ENCODE measurements at regions of chr15 and their contacts with region 1.

Region 1: DNA sequence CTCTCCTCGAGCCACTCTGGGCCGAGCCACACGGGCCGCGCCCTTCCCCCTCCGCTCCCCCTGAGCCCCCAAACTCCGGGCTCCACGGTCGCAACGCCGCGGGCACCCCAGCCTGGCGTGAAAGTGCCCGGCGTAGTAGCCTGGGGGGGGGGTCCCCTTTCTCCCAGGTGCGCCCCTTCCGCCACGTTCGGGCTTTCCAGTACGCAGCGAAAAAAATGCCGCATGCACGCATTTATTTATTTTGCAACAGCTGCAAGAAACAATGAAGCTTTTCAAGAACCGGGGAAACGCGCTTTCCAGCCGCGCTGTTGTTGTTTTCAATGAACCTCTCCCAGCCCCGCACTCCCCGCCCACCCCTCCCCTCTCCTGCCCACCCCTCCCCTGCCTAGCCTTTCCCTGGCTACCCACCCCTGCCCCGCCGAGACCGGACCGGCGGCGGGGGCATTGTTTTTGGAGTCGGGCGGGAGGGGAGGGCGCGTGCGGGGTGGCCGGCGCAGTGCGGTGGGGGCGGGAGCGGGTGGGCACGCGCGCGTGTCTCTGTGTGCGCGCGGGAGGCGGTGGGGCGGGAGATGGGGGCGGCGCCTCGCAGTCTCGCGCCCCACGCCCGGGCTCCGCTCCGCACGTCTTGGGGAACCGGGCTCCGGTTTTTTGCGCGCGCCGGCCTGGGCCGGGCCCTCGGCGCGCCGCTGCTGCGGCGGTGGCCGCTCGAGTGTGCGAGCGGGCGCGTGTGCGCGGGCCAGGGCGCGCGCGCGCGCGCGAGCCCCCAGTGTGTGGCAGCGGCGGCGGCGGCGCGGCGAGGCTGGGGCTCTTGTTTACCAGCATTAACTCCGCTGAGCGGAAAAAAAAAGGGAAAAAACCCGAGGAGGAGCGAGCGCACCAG is at the start of gene IGF1R:
- DNase-seq: peak; percentile 98
- H3K4me3 Mint-ChIP-seq: peak within 1 kb of the TSS; percentile 85
- H3K27ac Mint-ChIP-seq: peak within 1 kb of the TSS; percentile 95
- H3K4me1 Mint-ChIP-seq: peaks cover 30% of the 10 kb centered on the region
- H3K27me3 Mint-ChIP-seq: peaks cover 55% of the 10 kb centered on the region
- total RNA-seq, gene IGF1R: 35.3 and 36.6 TPM in 2 replicates

Region 2: DNA sequence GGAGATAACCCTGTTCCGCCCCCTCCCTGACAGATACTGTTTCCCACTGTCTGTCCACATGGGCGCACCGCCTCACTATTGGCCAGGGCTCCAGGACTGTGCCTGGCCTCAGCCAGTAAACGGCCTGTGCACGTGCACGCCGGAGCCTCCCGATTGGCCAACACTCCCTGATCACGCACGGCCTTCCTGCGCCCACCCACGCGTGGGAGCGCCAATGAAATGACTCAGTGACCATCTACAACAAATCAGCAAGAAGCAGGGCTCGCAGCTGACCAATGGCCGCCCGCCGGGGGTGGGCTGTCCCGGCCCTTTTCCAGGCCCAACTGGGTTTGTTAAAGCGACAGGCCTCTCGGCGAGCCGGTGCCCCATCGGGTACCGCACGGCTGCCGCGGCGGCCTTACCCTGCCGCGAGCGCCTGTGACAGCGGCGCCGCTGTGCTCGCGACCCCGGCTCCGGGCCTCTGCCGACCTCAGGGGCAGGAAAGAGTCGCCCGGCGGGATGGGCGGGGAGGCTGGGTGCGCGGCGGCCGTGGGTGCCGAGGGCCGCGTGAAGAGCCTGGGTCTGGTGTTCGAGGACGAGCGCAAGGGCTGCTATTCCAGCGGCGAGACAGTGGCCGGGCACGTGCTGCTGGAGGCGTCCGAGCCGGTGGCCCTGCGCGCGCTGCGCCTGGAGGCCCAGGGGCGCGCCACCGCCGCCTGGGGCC is 687.5 kb before region 1 on chr15 and contains the start of gene ARRDC4:
- intact Hi-C with region 1: loop called (anchors 10 kb)
- DNase-seq: peak; percentile 99
- H3K4me3 Mint-ChIP-seq: peak within 1 kb of the TSS; percentile 70
- H3K27ac Mint-ChIP-seq: peak within 1 kb of the TSS; percentile 89
- H3K4me1 Mint-ChIP-seq: peaks cover 19% of the 10 kb centered on the region
- H3K27me3 Mint-ChIP-seq: peaks cover 18% of the 10 kb centered on the region
- total RNA-seq, gene ARRDC4: 1.0 and 1.1 TPM in 2 replicates

Region 3: GRCh38 chr15:98493917-98494511 is 154.0 kb before region 1 on chr15:
- intact Hi-C with region 1: no loop called
- DNase-seq: no peak
- H3K4me3 Mint-ChIP-seq: no peak overlapping the region
- H3K27ac Mint-ChIP-seq: no peak overlapping the region
- H3K4me1 Mint-ChIP-seq: no peaks in the 10 kb centered on the region
- H3K27me3 Mint-ChIP-seq: peaks cover 5% of the 10 kb centered on the region

Region 4: DNA sequence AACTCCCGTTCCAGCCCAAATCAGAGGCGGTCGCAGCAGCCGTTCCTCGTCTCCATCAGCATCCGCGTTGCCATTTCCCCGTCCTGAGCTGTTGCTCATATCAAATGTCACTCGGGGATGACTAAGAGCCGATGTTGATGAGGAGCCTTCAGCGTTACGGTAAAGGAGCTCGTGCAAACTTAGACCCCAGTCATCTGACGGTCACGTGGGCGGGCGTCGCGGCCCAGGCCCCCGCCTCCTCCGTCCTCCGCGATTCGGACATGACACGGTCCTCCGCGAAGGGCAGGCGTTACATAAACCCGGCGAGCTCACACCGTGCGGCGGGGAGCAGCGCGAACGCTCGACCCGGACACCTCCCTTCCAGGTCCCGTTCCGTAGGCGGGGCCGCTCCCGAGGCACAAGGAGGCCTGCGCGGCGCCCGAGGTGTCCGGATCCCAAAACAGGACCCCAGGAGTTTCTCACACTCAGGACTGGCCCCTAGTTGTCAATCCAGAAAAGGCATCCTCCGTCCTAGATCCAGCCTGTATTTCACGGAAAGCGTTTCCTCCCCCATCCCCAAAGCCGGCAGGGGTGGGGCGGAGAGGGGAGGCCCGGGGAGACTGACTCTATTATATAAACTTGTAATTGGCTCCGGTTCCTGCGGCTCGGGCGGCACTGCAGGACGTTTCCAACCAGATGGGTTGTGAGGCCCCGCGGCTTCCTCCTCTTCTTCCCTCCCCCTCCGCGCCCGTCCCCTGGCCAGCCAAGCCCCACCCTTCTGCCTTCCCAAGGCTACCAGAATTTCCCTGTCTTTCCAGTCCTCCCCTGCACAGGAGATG is 99.7 kb before region 1 on chr15:
- intact Hi-C with region 1: loop called (anchors 1 kb)
- DNase-seq: peak; percentile 74
- H3K4me3 Mint-ChIP-seq: peak overlapping the region; percentile 88
- H3K27ac Mint-ChIP-seq: peak overlapping the region; percentile 75
- H3K4me1 Mint-ChIP-seq: peaks cover 14% of the 10 kb centered on the region
- H3K27me3 Mint-ChIP-seq: peaks cover 49% of the 10 kb centered on the region

Region 5: GRCh38 chr15:98668566-98669308 is 20.7 kb after region 1 on chr15:
- intact Hi-C with region 1: loop called (anchors 2 kb)
- DNase-seq: peak; percentile 84
- H3K4me3 Mint-ChIP-seq: peak overlapping the region; percentile 32
- H3K27ac Mint-ChIP-seq: peak overlapping the region; percentile 32
- H3K4me1 Mint-ChIP-seq: peaks cover 50% of the 10 kb centered on the region
- H3K27me3 Mint-ChIP-seq: no peaks in the 10 kb centered on the region

Region 6: GRCh38 chr15:99014803-99015676 is 367.0 kb after region 1 on chr15:
- intact Hi-C with region 1: loop called (anchors 10 kb)
- DNase-seq: peak; percentile 87
- H3K4me3 Mint-ChIP-seq: peak overlapping the region; percentile 82
- H3K27ac Mint-ChIP-seq: peak overlapping the region; percentile 79
- H3K4me1 Mint-ChIP-seq: peaks cover 4% of the 10 kb centered on the region
- H3K27me3 Mint-ChIP-seq: peaks cover 25% of the 10 kb centered on the region

Region 7: DNA sequence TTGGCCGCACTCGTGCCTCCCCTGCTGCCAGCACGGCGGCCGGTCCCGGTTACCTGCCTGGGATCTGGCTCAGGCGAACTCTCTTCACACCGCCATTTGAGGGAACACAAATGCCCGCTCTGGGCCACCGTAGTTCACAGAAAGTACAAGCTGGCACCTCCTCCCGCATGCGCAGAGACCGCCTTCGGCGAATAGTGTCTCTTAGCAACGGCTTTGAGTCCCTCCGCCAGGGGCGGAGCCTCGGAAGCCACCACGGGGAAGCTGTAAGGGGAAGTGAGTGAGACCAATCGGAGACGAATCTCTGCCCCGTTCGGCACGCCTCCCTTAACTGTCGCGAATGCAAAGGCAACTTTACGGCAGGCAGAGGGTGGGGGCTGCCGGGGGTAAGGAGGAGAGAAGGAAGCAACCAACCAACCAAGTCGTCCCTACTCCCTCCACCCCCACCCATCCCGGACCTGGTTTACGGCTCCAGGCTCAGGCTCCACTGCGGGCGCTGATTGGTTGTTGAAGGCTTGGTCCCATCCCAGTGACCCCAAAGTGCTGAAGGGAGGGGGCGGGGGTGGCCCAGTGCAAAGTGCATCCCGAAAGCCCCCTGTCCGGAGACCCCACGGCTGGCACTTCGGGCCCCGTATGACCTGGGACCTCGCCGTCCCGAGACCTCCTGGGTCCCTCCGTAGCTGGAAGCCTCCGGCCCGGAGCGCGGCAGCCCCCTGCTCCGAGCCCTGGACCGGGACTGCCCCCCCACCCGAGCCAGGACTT is 1954.2 kb after region 1 on chr15 and contains the starts of genes ASB7 and LINS1:
- intact Hi-C with region 1: loop called (anchors 5 kb)
- DNase-seq: peak; percentile 100
- H3K4me3 Mint-ChIP-seq: no peak within 1 kb of the TSS
- H3K27ac Mint-ChIP-seq: no peak within 1 kb of the TSS
- H3K4me1 Mint-ChIP-seq: peaks cover 54% of the 10 kb centered on the region
- H3K27me3 Mint-ChIP-seq: no peaks in the 10 kb centered on the region
- total RNA-seq, gene ASB7: 17.8 and 18.0 TPM in 2 replicates
- total RNA-seq, gene LINS1: 63.9 and 64.9 TPM in 2 replicates

Measured in activated CD4-positive, alpha-beta T cell treated with anti-CD3 and anti-CD28 coated beads, Interleukin-2, amount 10 ng/mL, durations not matched to agents 24 days and 14 days (primary cell).